Esophagus muscularis mucosa (tissue), 4 donors: ENCODE measurements at regions of chr15 and their contacts with region 1.

Region 1: GRCh38 chr15:26864664-26865191 is 2.1 kb upstream of the GABRA5 start:
- DNase-seq: peak; percentile 68
- H3K4me3 ChIP-seq: no peak overlapping the region
- H3K27ac ChIP-seq: peak overlapping the region in 1 of 4 donors; percentile 38
- H3K4me1 ChIP-seq: peaks cover 5 to 44% (median 29%) of the 10 kb centered on the region in 4 donors
- H3K27me3 ChIP-seq: peaks cover 0 to 29% (median 0%) of the 10 kb centered on the region in 4 donors
- CTCF ChIP-seq: peak; percentile 63 to 69 (median 65)
- EP300 ChIP-seq: no peak
- POLR2A ChIP-seq: no peak

Region 2: GRCh38 chr15:25508369-25509002 is 1356.2 kb before region 1 on chr15:
- intact Hi-C with region 1: loop called (anchors 5 kb)
- DNase-seq: no peak
- H3K4me3 ChIP-seq: no peak overlapping the region
- H3K27ac ChIP-seq: no peak overlapping the region
- H3K4me1 ChIP-seq: peaks cover 0 to 27% (median 3%) of the 10 kb centered on the region in 4 donors
- H3K27me3 ChIP-seq: no peaks in the 10 kb centered on the region
- CTCF ChIP-seq: peak; percentile 73 to 80 (median 75)
- EP300 ChIP-seq: no peak
- POLR2A ChIP-seq: no peak

Region 3: DNA sequence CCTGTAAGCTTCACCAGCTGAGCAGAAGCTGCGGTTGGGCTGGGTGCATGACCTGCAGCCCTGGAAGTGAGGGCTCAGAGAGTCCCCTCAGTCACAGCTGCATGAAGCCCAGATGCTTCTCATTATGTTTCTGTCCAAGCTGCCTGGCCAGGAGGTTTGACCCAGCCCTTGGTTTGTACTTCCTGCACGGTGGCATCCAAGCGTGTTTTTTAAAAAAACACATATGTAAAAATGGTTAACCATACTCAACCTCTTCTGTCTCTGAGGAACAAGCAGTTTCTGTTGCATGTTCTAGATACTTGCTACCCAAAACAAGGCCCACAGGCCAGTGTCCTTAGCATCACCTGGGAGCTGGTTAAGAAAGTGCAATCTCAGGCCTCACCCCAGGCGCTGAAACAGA is 925.6 kb before region 1 on chr15:
- intact Hi-C with region 1: loop called (anchors 5 kb)
- DNase-seq: no peak
- H3K4me3 ChIP-seq: no peak overlapping the region
- H3K27ac ChIP-seq: no peak overlapping the region
- H3K4me1 ChIP-seq: peaks cover 0 to 3% (median under 1%) of the 10 kb centered on the region in 4 donors
- H3K27me3 ChIP-seq: no peaks in the 10 kb centered on the region
- CTCF ChIP-seq: no peak
- EP300 ChIP-seq: no peak
- POLR2A ChIP-seq: no peak

Region 4: GRCh38 chr15:25954398-25954797 is 910.3 kb before region 1 on chr15:
- intact Hi-C with region 1: no loop called
- DNase-seq: no peak
- H3K4me3 ChIP-seq: no peak overlapping the region
- H3K27ac ChIP-seq: no peak overlapping the region
- H3K4me1 ChIP-seq: no peaks in the 10 kb centered on the region
- H3K27me3 ChIP-seq: no peaks in the 10 kb centered on the region
- CTCF ChIP-seq: no peak
- EP300 ChIP-seq: no peak
- POLR2A ChIP-seq: no peak

Region 5: DNA sequence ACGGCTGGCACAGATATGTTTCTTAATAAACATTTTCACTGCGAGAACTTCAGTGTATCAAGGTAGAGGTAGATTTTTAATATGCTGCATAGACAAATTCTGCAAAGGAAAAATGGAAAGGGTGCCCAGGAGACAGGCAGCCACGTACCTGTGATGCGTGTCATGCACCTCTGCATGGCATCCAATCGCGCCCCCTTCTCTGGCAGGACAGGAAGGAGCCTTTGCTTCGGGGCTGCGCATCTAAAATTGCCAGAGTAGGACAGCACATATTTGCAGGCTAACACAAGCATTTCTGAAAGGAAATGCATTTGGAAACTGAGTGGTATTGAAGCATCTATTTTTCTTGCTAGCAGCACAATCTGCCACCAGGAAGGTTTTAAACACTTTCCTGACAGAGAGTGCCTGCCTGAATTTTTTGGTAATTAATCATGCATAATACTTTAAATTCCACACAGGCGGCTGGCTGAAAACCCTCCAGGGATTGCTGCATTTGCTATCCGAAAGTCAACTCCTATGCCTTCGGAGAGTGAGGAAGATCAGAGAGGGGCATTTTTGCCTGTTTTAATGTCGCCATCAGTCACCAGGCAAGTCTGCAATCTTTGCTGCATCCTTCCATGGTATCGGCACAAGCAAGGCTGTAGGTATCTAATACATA is 836.5 kb before region 1 on chr15:
- intact Hi-C with region 1: loop called (anchors 10 kb)
- DNase-seq: peak; percentile 68
- H3K4me3 ChIP-seq: peak overlapping the region in 3 of 4 donors; percentile 6 to 35 (median 6)
- H3K27ac ChIP-seq: no peak overlapping the region
- H3K4me1 ChIP-seq: peaks cover 0 to 12% (median 10%) of the 10 kb centered on the region in 4 donors
- H3K27me3 ChIP-seq: no peaks in the 10 kb centered on the region
- CTCF ChIP-seq: no peak
- EP300 ChIP-seq: no peak
- POLR2A ChIP-seq: no peak

Region 6: DNA sequence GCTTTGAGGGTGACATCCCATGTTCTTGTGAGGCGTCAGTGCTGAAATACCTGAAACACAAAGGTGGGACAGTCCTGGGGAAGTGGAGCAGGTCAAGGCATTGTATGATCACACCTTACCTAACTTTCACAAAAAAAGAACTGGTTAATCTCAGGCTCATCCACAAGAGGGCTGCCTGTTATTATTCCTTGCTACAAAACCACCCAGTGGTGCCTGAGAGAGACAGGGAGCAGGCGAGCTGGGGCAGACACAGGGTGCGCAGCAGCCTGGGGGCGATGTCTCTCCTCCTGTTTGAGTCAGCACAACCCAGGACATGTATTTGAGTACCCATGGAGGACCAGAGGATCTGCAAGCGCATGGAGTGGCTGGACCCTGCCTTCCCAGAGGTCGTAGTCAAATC is 684.8 kb before region 1 on chr15:
- intact Hi-C with region 1: loop called (anchors 10 kb)
- DNase-seq: peak; percentile 84
- H3K4me3 ChIP-seq: no peak overlapping the region
- H3K27ac ChIP-seq: no peak overlapping the region
- H3K4me1 ChIP-seq: no peaks in the 10 kb centered on the region
- H3K27me3 ChIP-seq: no peaks in the 10 kb centered on the region
- CTCF ChIP-seq: peak; percentile 16 to 42 (median 41)
- EP300 ChIP-seq: no peak
- POLR2A ChIP-seq: no peak

Region 7: GRCh38 chr15:26831951-26832350 is 32.8 kb before region 1 on chr15:
- intact Hi-C with region 1: no loop called
- DNase-seq: no peak
- H3K4me3 ChIP-seq: no peak overlapping the region
- H3K27ac ChIP-seq: no peak overlapping the region
- H3K4me1 ChIP-seq: no peaks in the 10 kb centered on the region
- H3K27me3 ChIP-seq: no peaks in the 10 kb centered on the region
- CTCF ChIP-seq: no peak
- EP300 ChIP-seq: no peak
- POLR2A ChIP-seq: no peak

Region 8: GRCh38 chr15:26983822-26984221 is 119.1 kb after region 1 on chr15:
- intact Hi-C with region 1: no loop called
- DNase-seq: no peak
- H3K4me3 ChIP-seq: no peak overlapping the region
- H3K27ac ChIP-seq: no peak overlapping the region
- H3K4me1 ChIP-seq: no peaks in the 10 kb centered on the region
- H3K27me3 ChIP-seq: no peaks in the 10 kb centered on the region
- CTCF ChIP-seq: no peak
- EP300 ChIP-seq: no peak
- POLR2A ChIP-seq: no peak